GM12878 (cell line): ENCODE measurements at regions of chr1 and their contacts with region 1.

Region 1: DNA sequence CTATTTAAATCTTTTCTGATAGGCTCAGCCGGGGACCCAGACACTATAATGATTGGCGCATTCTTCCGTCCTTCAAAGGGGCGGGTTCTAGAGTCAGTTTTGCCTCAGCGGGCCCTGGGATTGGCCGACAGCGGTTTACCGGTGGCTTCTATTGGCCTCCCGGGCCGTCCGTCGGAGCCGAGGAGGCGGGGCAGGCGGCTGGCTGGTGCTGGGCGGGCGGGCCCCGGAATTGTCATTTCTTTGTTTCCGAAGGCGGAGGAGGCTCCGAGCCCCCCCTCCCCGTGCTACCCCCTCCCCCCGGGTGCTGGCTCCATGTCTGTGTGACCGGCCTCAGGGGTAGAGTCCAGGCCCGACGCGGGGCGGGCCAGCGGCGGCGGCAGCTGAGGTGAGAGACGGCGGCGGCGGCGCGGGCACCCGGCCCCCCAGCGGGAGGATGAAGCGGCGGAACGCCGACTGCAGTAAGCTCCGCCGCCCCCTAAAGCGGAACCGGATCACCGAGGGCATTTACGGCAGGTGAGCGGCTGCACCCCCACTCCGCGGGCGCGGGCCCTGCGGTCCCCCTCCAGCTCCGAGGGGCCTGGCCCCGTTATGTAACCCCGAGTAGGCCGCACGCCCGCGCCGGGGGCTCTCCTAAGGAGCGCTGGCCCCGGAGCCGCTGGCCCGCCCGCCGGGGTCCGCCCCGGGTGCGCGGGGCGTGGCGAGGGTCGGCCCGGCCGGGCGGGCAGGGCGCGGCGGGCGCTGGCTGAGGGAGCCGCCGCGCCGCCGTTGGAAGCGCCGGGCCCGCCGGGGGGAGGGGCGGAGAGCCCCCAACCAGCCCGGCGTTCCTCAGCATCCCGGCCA is at the start of gene MACO1:
- DNase-seq: peak; percentile 75
- ATAC-seq: peak; percentile 94
- H3K4me3 ChIP-seq: peak within 1 kb of the TSS; percentile 79
- H3K27ac ChIP-seq: peak within 1 kb of the TSS; percentile 56
- H3K4me1 ChIP-seq: peaks cover 7% of the 10 kb centered on the region
- H3K27me3 ChIP-seq: no peaks in the 10 kb centered on the region
- CTCF ChIP-seq: no peak
- EP300 ChIP-seq: no peak
- POLR2A ChIP-seq: peak; percentile 58; the same call in 1 of the 2 replicates
- RAD21 ChIP-seq: no peak
- polyA plus RNA-seq, gene MACO1: 3.2 to 4.2 TPM

Region 2: GRCh38 chr1:25442178-25442577 is 11.3 kb after region 1 on chr1:
- CTCF ChIA-PET with region 1: interaction called, 4 read pairs
- POLR2A ChIA-PET with region 1: interaction called, 15 read pairs
- RAD21 ChIA-PET with region 1: interaction called, 67 read pairs
- SMC1A ChIA-PET with region 1: interaction called, 45 read pairs
- in situ Hi-C with region 1: no loop called
- intact Hi-C with region 1: no loop called
- DNase-seq: no peak
- ATAC-seq: no peak
- H3K4me3 ChIP-seq: no peak overlapping the region
- H3K27ac ChIP-seq: no peak overlapping the region
- H3K4me1 ChIP-seq: peaks cover 11% of the 10 kb centered on the region; the same call in 1 of the 2 replicates
- H3K27me3 ChIP-seq: no peaks in the 10 kb centered on the region
- CTCF ChIP-seq: no peak; a peak in 1 of 6 replicates
- EP300 ChIP-seq: no peak
- POLR2A ChIP-seq: no peak
- RAD21 ChIP-seq: no peak

Region 3: GRCh38 chr1:25447547-25447946 is 16.7 kb after region 1 on chr1:
- CTCF ChIA-PET with region 1: interaction called, 37 read pairs
- POLR2A ChIA-PET with region 1: interaction called, 15 read pairs
- RAD21 ChIA-PET with region 1: interaction called, 67 read pairs
- SMC1A ChIA-PET with region 1: interaction called, 45 read pairs
- in situ Hi-C with region 1: no loop called
- intact Hi-C with region 1: no loop called
- DNase-seq: peak; percentile 79
- ATAC-seq: peak; percentile 94
- H3K4me3 ChIP-seq: no peak overlapping the region
- H3K27ac ChIP-seq: peak overlapping the region; percentile 62; the same call in 1 of the 2 replicates
- H3K4me1 ChIP-seq: peaks cover 37% of the 10 kb centered on the region
- H3K27me3 ChIP-seq: no peaks in the 10 kb centered on the region
- CTCF ChIP-seq: no peak
- EP300 ChIP-seq: peak; percentile 70 to 93
- POLR2A ChIP-seq: no peak
- RAD21 ChIP-seq: no peak

Region 4: DNA sequence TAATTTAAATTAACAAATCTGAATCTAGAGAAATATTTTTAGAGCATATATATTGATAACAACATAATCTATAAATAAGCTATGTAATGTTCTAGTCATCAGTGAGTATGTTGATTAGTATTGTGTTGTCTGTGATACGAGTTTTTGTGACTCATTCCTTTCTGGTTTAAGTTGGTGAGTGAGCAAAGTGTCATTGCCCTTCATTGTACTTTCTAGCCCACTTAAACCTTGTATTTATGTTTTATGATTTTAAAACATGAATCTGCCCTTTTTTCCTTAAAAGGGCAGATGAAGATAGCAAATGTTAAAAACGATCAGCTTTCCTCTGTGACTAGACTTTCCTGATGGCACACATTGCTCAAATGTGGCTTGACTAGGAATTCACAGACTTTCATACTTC is 38.3 kb after region 1 on chr1:
- CTCF ChIA-PET with region 1: interaction called, 4 read pairs
- POLR2A ChIA-PET with region 1: interaction called, 15 read pairs
- RAD21 ChIA-PET with region 1: interaction called, 26 read pairs
- SMC1A ChIA-PET with region 1: interaction called, 78 read pairs
- in situ Hi-C with region 1: no loop called
- intact Hi-C with region 1: no loop called
- DNase-seq: no peak
- ATAC-seq: no peak
- H3K4me3 ChIP-seq: no peak overlapping the region
- H3K27ac ChIP-seq: no peak overlapping the region
- H3K4me1 ChIP-seq: peaks cover 11% of the 10 kb centered on the region
- H3K27me3 ChIP-seq: no peaks in the 10 kb centered on the region
- CTCF ChIP-seq: no peak
- EP300 ChIP-seq: no peak
- POLR2A ChIP-seq: no peak
- RAD21 ChIP-seq: no peak

Region 5: GRCh38 chr1:25476186-25477097 is 45.6 kb after region 1 on chr1:
- CTCF ChIA-PET with region 1: interaction called, 8 read pairs
- POLR2A ChIA-PET with region 1: interaction called, 19 read pairs
- RAD21 ChIA-PET with region 1: interaction called, 26 read pairs
- SMC1A ChIA-PET with region 1: interaction called, 78 read pairs
- in situ Hi-C with region 1: no loop called
- intact Hi-C with region 1: loop called (anchors 2 kb)
- DNase-seq: peak; percentile 26
- ATAC-seq: peak; percentile 55
- H3K4me3 ChIP-seq: no peak overlapping the region
- H3K27ac ChIP-seq: peak overlapping the region; percentile 13; the same call in 1 of the 2 replicates
- H3K4me1 ChIP-seq: peaks cover 13% of the 10 kb centered on the region
- H3K27me3 ChIP-seq: no peaks in the 10 kb centered on the region
- CTCF ChIP-seq: no peak
- EP300 ChIP-seq: peak in 1 of 2 experiments; percentile 68; a peak in 2 of 4 replicates
- POLR2A ChIP-seq: no peak
- RAD21 ChIP-seq: no peak